ENCODE measurements at regions of chr20 and their contacts with region 1.

Region 1: DNA sequence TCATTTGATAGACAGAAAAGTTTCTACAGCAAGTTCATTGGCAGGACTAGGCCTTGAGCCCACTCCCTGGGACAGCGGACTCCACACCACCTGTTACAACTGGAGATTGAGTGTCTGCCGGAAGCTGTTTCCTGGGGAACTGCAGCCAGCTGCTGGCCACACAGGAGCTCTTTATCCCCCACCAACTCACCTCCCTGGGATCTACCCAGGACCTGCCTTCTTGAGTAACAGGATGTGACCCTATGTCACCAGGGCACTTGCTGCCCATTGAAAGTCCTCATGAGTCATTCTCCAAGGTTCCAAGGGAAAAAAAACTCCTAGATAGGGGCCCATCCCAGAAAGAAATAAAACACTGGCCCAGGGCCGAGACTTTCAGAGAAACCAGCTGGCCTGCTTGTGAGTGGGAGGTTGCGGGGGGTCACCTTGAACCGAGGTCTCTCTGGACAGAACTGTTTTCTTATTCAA is 37.4 kb upstream of the SLC9A8 start:
- DNase-seq: peak; percentile 87 to 100
- H3K4me3 ChIP-seq: peak overlapping the region; percentile 52
- H3K27ac ChIP-seq: peak overlapping the region; percentile 96
- H3K4me1 ChIP-seq: peaks cover 67% of the 10 kb centered on the region
- H3K27me3 ChIP-seq: no peaks in the 10 kb centered on the region
- CTCF ChIP-seq: no peak

Region 2: GRCh38 chr20:49685809-49686208 is 89.5 kb before region 1 on chr20:
- CTCF ChIA-PET with region 1: no interaction called
- POLR2A ChIA-PET with region 1: interaction called, 10 read pairs
- intact Hi-C with region 1: no loop called
- DNase-seq: no peak
- H3K4me3 ChIP-seq: no peak overlapping the region
- H3K27ac ChIP-seq: peak overlapping the region; percentile 91
- H3K4me1 ChIP-seq: peaks cover 98% of the 10 kb centered on the region
- H3K27me3 ChIP-seq: no peaks in the 10 kb centered on the region
- CTCF ChIP-seq: no peak

Region 3: GRCh38 chr20:49787376-49788357 is 12.4 kb after region 1 on chr20:
- CTCF ChIA-PET with region 1: no interaction called
- POLR2A ChIA-PET with region 1: interaction called, 28 read pairs
- intact Hi-C with region 1: no loop called
- DNase-seq: no peak
- H3K4me3 ChIP-seq: no peak overlapping the region
- H3K27ac ChIP-seq: peak overlapping the region; percentile 97
- H3K4me1 ChIP-seq: peaks cover 60% of the 10 kb centered on the region
- H3K27me3 ChIP-seq: no peaks in the 10 kb centered on the region
- CTCF ChIP-seq: no peak

Region 4: DNA sequence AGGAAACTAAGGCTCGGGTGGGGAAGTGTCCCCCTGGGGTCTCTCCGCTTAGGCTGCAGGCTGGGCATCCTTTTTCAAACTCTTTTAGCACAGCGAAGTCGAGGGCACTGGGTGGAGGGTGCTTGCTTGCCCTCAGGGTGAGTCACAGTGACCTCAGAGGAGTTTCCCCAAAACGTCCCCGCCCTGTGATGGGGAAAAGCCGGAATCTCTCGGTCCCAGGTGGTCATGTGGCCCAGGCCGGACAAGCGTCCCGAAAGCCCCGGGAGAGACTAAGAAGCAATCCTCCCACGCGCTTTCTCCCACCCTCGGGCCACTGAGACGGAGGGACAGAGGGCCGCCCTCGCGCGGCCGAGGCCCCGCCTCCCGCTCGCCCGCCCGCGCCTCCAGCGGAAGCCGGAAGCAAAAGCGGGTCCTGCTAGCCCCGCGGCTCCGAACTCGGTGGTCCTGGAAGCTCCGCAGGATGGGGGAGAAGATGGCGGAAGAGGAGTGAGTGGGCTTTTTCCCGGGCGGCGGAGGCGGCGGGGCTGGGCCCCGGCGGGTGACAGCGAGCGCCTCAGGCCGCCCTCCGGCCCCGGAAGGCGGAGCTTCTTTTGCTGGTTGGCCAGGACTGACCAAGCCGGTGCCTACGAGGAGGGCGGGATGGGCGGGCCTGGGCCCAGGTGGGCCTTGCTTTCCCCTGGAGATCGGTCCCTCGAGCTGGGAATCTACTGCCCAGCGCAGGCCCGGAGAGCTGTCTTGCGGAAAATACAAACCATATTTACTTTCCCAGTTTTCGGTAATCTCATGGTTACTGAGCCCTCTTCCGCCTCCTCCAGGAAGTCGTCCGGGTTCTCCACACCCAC is 37.4 kb after region 1 on chr20 and contains the start of gene SLC9A8:
- CTCF ChIA-PET with region 1: interaction called, 7 read pairs
- POLR2A ChIA-PET with region 1: interaction called, 15 read pairs
- intact Hi-C with region 1: loop called (anchors 1 kb)
- DNase-seq: peak; percentile 94 to 97
- H3K4me3 ChIP-seq: peak within 1 kb of the TSS; percentile 87
- H3K27ac ChIP-seq: peak within 1 kb of the TSS; percentile 98
- H3K4me1 ChIP-seq: peaks cover 70% of the 10 kb centered on the region
- H3K27me3 ChIP-seq: no peaks in the 10 kb centered on the region
- CTCF ChIP-seq: no peak
- total RNA-seq, gene SLC9A8: 12.7 and 21.4 TPM in 2 replicates

Measured in PC-9 (cell line).